Mammary epithelial cell (primary cell): ENCODE measurements at regions of chr7 and their contacts with region 1.

Region 1: DNA sequence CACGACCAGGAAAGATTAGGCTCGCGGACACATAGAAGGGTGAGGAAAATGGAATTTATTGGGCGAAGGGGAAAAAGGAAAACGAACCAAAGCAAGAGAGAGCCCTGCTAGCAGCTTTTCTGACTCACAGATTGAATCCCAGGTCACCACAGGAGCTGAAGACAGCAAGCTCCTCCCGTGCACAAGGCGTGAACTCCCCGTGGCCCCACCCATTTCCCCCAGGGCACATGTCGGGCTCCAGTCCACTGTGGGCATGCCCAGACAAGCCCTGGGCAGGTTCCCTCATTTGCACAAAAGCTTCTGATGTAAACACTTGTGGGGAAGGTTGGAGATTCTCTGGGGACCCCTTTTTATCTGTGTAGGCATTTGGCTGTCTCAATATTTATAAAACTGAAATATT is 582.4 kb downstream of the SUGCT start:
- DNase-seq: peak; percentile 93
- H3K4me3 ChIP-seq: peak overlapping the region in 2 of 3 experiments; percentile 9 to 28
- H3K27ac ChIP-seq: peak overlapping the region; percentile 67
- H3K4me1 ChIP-seq: peaks cover 34% of the 10 kb centered on the region
- H3K27me3 ChIP-seq: no peaks in the 10 kb centered on the region
- CTCF ChIP-seq: no peak

Region 2: DNA sequence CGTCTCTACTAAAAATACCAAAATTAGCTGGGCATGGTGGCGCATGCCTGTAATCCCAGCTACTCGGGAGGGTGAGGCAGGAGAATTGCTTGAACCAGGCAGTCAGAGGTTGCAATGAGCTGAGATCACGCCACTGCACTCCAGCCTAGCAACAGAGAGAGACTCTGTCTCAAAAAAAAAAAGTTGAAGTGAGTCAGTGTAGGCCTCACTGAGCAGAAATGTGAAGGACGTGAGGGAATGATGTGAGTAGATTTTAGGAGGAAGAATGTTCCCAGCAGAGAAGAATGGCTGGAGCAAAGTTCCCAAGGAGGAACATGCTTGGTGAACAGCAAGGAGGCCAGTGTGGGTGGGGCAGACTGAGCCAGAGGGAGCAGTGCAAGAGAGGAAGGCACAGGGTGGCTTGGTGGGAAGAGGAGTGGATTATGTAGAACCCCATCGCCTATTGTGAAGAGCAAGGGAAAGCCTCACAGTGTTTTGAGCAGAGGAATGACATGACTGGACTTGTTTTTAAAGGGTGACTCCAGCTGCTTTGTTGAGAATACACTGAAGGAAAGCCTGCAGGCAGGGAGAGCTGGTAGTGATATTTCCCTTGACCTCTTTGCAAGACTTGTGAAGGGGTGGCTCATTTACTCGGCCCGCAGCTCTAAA is 126.2 kb after region 1 on chr7:
- CTCF ChIA-PET with region 1: no interaction called
- dilution Hi-C with region 1: no loop called
- in situ Hi-C with region 1: no loop called
- intact Hi-C with region 1: loop called (anchors 10 kb)
- DNase-seq: peak; percentile 94
- H3K4me3 ChIP-seq: no peak overlapping the region
- H3K27ac ChIP-seq: peak overlapping the region; percentile 93
- H3K4me1 ChIP-seq: peaks cover 31% of the 10 kb centered on the region
- H3K27me3 ChIP-seq: no peaks in the 10 kb centered on the region
- CTCF ChIP-seq: no peak